Endothelial cell of umbilical vein (primary cell): ENCODE measurements at regions of chr5 and their contacts with region 1.

Region 1: DNA sequence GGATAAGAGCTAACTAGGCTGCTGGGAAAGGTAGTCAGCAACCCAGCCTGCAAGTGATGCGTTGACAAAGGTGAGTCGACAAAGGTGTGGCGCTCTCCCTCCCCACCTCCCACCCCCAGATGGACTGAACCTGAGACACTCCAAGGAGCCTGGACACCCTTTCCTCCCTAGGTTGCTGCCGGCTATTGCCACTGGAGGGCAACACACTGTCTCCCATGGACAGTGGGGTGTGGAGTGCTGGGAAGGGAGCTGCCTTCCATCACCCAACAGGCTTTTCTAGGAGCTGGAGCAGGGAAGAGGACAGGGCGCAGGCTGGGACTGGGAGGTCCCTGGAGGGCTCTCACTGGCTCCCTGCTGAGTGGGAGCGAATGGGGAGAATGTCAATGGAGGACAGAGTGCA is 75.4 kb upstream of the ARAP3 start:
- DNase-seq: peak; percentile 57
- H3K4me3 ChIP-seq: no peak overlapping the region
- H3K27ac ChIP-seq: no peak overlapping the region
- H3K4me1 ChIP-seq: no peaks in the 10 kb centered on the region
- H3K27me3 ChIP-seq: peaks cover 23 to 36% of the 10 kb centered on the region in 2 experiments
- CTCF ChIP-seq: peak; percentile 54 to 77
- POLR2A ChIP-seq: no peak

Region 2: GRCh38 chr5:141664732-141665461 is 92.5 kb before region 1 on chr5:
- CTCF ChIA-PET with region 1: interaction called, 5 read pairs
- POLR2A ChIA-PET with region 1: no interaction called
- dilution Hi-C with region 1: no loop called
- intact Hi-C with region 1: loop called (anchors 2 kb)
- DNase-seq: peak; percentile 73
- H3K4me3 ChIP-seq: no peak overlapping the region
- H3K27ac ChIP-seq: no peak overlapping the region
- H3K4me1 ChIP-seq: peaks cover 4% of the 10 kb centered on the region
- H3K27me3 ChIP-seq: no peaks in the 10 kb centered on the region
- CTCF ChIP-seq: peak; percentile 85 to 90
- POLR2A ChIP-seq: no peak

Region 3: GRCh38 chr5:141701360-141702119 is 55.9 kb before region 1 on chr5:
- CTCF ChIA-PET with region 1: interaction called, 19 read pairs
- POLR2A ChIA-PET with region 1: no interaction called
- dilution Hi-C with region 1: no loop called
- intact Hi-C with region 1: loop called (anchors 2 kb)
- DNase-seq: no peak
- H3K4me3 ChIP-seq: no peak overlapping the region
- H3K27ac ChIP-seq: no peak overlapping the region
- H3K4me1 ChIP-seq: peaks cover 5% of the 10 kb centered on the region
- H3K27me3 ChIP-seq: peaks cover 19 to 33% of the 10 kb centered on the region in 2 experiments
- CTCF ChIP-seq: no peak
- POLR2A ChIP-seq: no peak

Region 4: GRCh38 chr5:141793881-141794280 is 36.5 kb after region 1 on chr5:
- CTCF ChIA-PET with region 1: no interaction called
- POLR2A ChIA-PET with region 1: no interaction called
- dilution Hi-C with region 1: no loop called
- intact Hi-C with region 1: no loop called
- DNase-seq: no peak
- H3K4me3 ChIP-seq: no peak overlapping the region
- H3K27ac ChIP-seq: no peak overlapping the region
- H3K4me1 ChIP-seq: no peaks in the 10 kb centered on the region
- H3K27me3 ChIP-seq: peaks cover 8% of the 10 kb centered on the region in 2 experiments
- CTCF ChIP-seq: no peak
- POLR2A ChIP-seq: no peak

Region 5: GRCh38 chr5:141805874-141806595 is 48.6 kb after region 1 on chr5:
- CTCF ChIA-PET with region 1: interaction called, 31 read pairs
- POLR2A ChIA-PET with region 1: no interaction called
- dilution Hi-C with region 1: no loop called
- intact Hi-C with region 1: no loop called
- DNase-seq: peak; percentile 86
- H3K4me3 ChIP-seq: no peak overlapping the region
- H3K27ac ChIP-seq: peak overlapping the region; percentile 81
- H3K4me1 ChIP-seq: peaks cover 25% of the 10 kb centered on the region
- H3K27me3 ChIP-seq: peaks cover 0 to 1% of the 10 kb centered on the region in 2 experiments
- CTCF ChIP-seq: no peak
- POLR2A ChIP-seq: no peak

Region 6: GRCh38 chr5:141811287-141812155 is 54.1 kb after region 1 on chr5:
- CTCF ChIA-PET with region 1: interaction called, 31 read pairs
- POLR2A ChIA-PET with region 1: no interaction called
- dilution Hi-C with region 1: no loop called
- intact Hi-C with region 1: loop called (anchors 1 kb)
- DNase-seq: no peak
- H3K4me3 ChIP-seq: no peak overlapping the region
- H3K27ac ChIP-seq: no peak overlapping the region
- H3K4me1 ChIP-seq: peaks cover 10% of the 10 kb centered on the region
- H3K27me3 ChIP-seq: peaks cover 0 to 1% of the 10 kb centered on the region in 2 experiments
- CTCF ChIP-seq: peak; percentile 72 to 77
- POLR2A ChIP-seq: no peak

Region 7: GRCh38 chr5:141825791-141826560 is 68.6 kb after region 1 on chr5:
- CTCF ChIA-PET with region 1: interaction called, 17 read pairs
- POLR2A ChIA-PET with region 1: no interaction called
- dilution Hi-C with region 1: no loop called
- intact Hi-C with region 1: no loop called
- DNase-seq: no peak
- H3K4me3 ChIP-seq: no peak overlapping the region
- H3K27ac ChIP-seq: no peak overlapping the region
- H3K4me1 ChIP-seq: peaks cover 14% of the 10 kb centered on the region
- H3K27me3 ChIP-seq: no peaks in the 10 kb centered on the region
- CTCF ChIP-seq: peak; percentile 15 to 25
- POLR2A ChIP-seq: no peak

Region 8: DNA sequence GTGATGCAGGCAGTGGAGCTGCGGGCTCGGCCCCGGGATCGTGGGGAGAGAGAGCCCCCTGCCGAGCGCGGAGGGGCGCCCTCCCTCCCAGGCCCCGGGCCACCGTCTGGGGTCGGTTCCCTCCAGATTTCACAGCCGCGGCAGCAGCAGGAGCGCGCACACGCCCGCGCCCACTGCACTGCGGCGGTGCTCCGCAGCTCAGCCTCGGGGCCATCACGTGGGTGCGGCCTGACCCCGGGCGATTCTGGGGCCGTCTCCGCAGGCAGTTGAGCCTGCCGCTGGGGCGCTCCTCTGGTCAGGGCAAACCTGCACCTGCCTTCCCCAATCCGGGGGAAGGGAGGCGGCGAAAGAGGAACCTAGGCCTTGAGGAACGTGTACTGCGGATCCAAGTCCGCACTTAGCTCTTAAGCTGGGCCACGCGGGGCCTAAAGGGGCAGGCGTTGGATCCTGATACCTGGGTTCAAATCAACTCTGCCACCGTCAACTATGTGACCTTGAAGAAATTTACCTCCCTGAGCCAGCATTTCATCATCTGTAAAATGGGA is 156.9 kb after region 1 on chr5:
- CTCF ChIA-PET with region 1: interaction called, 12 read pairs
- POLR2A ChIA-PET with region 1: no interaction called
- dilution Hi-C with region 1: no loop called
- intact Hi-C with region 1: no loop called
- DNase-seq: peak; percentile 9
- H3K4me3 ChIP-seq: peak overlapping the region in 1 of 3 experiments; percentile 20
- H3K27ac ChIP-seq: no peak overlapping the region
- H3K4me1 ChIP-seq: peaks cover 3% of the 10 kb centered on the region
- H3K27me3 ChIP-seq: peaks cover 9 to 14% of the 10 kb centered on the region in 2 experiments
- CTCF ChIP-seq: peak in 1 of 2 donors; percentile 43
- POLR2A ChIP-seq: no peak